Ascending aorta (tissue), 2 donors: ENCODE measurements at regions of chr22 and their contacts with region 1.

Region 1: DNA sequence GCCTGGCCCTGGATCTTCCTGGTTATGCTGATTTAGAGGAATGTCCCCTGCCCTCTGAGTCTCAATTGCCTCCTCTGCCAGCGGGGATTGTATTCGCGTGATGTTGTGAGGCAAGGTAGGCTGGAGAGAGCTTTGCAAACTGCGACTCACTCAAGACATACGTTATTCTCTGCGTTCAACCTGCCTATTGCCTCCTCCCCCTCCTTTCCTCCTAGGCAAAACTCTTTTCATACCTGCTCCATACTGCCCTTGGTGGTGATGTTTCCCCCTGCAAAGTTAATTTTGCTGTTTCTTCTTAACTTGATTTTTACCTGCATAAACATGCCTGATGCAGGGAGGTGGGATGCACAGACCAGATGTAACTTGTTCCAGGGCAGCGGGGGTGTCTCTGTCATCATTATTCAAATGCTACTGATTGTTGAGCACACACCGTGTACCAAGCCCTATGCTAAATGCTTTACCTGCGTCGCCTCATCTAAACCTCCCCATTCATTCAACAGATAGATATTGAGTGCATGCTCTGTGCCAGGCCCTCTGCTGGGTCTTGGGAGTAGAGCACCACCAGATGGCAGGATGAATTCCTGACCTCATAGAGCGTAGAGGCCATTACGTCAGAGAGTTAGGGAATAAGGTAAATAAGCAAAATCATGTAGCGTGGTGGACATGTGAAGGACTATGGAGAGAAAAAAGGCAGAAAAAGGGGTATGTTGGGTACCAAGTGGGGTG is 29.0 kb downstream of the SGSM1 start:
- DNase-seq: no peak
- H3K4me3 ChIP-seq: no peak overlapping the region
- H3K27ac ChIP-seq: no peak overlapping the region
- H3K4me1 ChIP-seq: no peaks in the 10 kb centered on the region
- H3K27me3 ChIP-seq: no peaks in the 10 kb centered on the region
- CTCF ChIP-seq: peak in 1 of 3 experiments; percentile 16

Region 2: GRCh38 chr22:24768537-24769374 is 66.3 kb before region 1 on chr22:
- intact Hi-C with region 1: loop called (anchors 5 kb)
- DNase-seq: peak in 1 of 2 donors; percentile 78
- H3K4me3 ChIP-seq: no peak overlapping the region
- H3K27ac ChIP-seq: no peak overlapping the region
- H3K4me1 ChIP-seq: no peaks in the 10 kb centered on the region
- H3K27me3 ChIP-seq: no peaks in the 10 kb centered on the region
- CTCF ChIP-seq: peak; percentile 43 to 60 (median 53)

Region 3: GRCh38 chr22:24812950-24813775 is 21.8 kb before region 1 on chr22:
- intact Hi-C with region 1: loop called (anchors 2 kb)
- DNase-seq: no peak
- H3K4me3 ChIP-seq: no peak overlapping the region
- H3K27ac ChIP-seq: peak overlapping the region in 1 of 2 donors; percentile 15
- H3K4me1 ChIP-seq: peaks cover 11 to 35% of the 10 kb centered on the region in 2 donors
- H3K27me3 ChIP-seq: no peaks in the 10 kb centered on the region
- CTCF ChIP-seq: no peak